Caco-2 (cell line): ENCODE measurements at regions of chr11 and their contacts with region 1.

Region 1: GRCh38 chr11:1882519-1883238 is 9.0 kb downstream of the PRR33 start:
- DNase-seq: peak; percentile 76 to 87
- H3K4me3 ChIP-seq: no peak overlapping the region
- H3K4me3 Mint-ChIP-seq: no peak overlapping the region
- H3K27ac Mint-ChIP-seq: no peak overlapping the region
- H3K4me1 ChIP-seq: peaks cover 8% of the 10 kb centered on the region
- H3K4me1 Mint-ChIP-seq: no peaks in the 10 kb centered on the region
- H3K27me3 ChIP-seq: no peaks in the 10 kb centered on the region
- H3K27me3 Mint-ChIP-seq: no peaks in the 10 kb centered on the region
- CTCF ChIP-seq: peak; percentile 89 to 95

Region 2: DNA sequence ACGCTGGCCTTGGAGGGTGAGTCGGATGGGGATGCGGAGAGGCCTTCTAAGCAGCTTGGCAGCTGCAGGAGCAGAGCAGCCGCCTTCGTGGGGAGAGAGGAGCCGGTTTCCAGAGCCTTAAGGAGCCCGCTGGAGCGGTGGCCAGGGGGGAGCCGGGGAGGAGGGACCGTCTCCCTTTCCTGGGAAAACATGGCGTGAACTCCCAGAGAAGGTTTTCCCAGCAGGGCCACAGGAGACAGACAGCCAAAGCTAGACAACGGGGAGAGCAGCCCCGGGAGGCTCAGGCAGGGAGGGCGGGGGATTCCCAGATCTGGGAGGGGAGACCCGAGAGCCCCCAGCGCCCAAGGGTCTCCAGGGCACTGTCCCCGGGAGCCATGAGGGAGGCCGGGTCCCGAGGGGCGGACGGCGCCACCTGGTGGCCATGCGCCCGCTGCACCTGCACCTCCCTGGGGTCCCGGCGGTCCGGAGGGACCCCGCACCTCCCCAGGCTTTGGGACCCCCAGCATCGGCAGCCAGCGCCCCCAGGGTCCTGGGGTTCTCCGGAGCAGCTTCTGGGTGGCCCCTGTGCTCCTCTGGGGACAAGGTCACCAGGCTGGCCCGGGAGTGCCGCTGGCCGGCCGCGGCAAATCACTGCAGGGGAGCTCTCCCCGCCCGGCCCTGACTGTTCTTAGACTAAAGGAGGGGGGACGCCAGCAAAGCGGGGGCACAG is 50.3 kb before region 1 on chr11:
- CTCF ChIA-PET with region 1: interaction called, 28 read pairs
- POLR2A ChIA-PET with region 1: no interaction called
- intact Hi-C with region 1: loop called (anchors 5 kb)
- DNase-seq: peak in 1 of 2 experiments; percentile 70
- H3K4me3 ChIP-seq: no peak overlapping the region
- H3K4me3 Mint-ChIP-seq: peak overlapping the region; percentile 33
- H3K27ac Mint-ChIP-seq: peak overlapping the region; percentile 98
- H3K4me1 ChIP-seq: peaks cover 78% of the 10 kb centered on the region
- H3K4me1 Mint-ChIP-seq: peaks cover 50% of the 10 kb centered on the region
- H3K27me3 ChIP-seq: no peaks in the 10 kb centered on the region
- H3K27me3 Mint-ChIP-seq: no peaks in the 10 kb centered on the region
- CTCF ChIP-seq: peak; percentile 80 to 95

Region 3: DNA sequence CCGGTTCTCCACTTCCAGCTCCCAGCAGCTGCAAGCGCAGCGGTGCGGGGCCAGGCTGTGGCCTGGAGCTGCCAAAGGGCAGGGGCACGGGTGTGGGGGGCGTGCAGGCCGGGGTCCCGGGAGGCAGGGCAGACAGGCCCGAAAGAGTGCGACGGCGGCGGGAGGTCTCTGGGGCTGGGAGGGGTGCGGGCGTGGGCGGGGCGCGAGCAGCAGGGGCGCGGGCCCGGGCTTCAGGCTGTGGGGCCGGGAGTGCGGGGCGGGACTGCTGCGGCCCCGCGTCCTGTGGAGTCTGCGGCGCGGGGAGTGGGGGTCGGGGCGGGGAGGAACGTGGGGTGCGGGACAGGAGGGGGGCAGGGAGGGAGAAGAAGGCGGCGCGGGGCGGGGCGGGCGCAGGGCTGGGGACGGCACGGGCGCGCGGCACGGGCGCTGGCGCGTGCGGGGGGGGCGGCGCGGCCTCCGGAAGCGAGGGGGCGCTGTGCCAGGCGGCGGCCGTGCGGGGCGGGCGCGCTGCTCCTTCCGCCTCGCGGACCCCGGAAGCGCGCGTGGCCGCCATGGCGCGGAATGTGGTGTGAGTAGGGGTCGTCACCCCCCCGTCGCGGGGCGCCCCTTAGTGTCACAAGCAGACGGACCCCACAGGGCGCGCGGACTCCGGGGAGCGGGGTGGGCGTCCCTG is 64.3 kb after region 1 on chr11 and contains the start of gene MRPL23:
- CTCF ChIA-PET with region 1: interaction called, 25 read pairs
- POLR2A ChIA-PET with region 1: no interaction called
- intact Hi-C with region 1: no loop called
- DNase-seq: no peak
- H3K4me3 ChIP-seq: no peak within 1 kb of the TSS
- H3K4me3 Mint-ChIP-seq: no peak within 1 kb of the TSS
- H3K27ac Mint-ChIP-seq: no peak within 1 kb of the TSS
- H3K4me1 ChIP-seq: no peaks in the 10 kb centered on the region
- H3K4me1 Mint-ChIP-seq: no peaks in the 10 kb centered on the region
- H3K27me3 ChIP-seq: no peaks in the 10 kb centered on the region
- H3K27me3 Mint-ChIP-seq: no peaks in the 10 kb centered on the region
- CTCF ChIP-seq: no peak
- total RNA-seq, gene MRPL23: 7.8 and 15.0 TPM in 2 replicates

Region 4: GRCh38 chr11:2574551-2575535 is 692.2 kb after region 1 on chr11:
- CTCF ChIA-PET with region 1: no interaction called
- POLR2A ChIA-PET with region 1: no interaction called
- intact Hi-C with region 1: no loop called
- DNase-seq: peak in 1 of 2 experiments; percentile 32
- H3K4me3 ChIP-seq: no peak overlapping the region
- H3K4me3 Mint-ChIP-seq: no peak overlapping the region
- H3K27ac Mint-ChIP-seq: no peak overlapping the region
- H3K4me1 ChIP-seq: peaks cover 10% of the 10 kb centered on the region; the same call in 1 of the 2 replicates
- H3K4me1 Mint-ChIP-seq: peaks cover 6% of the 10 kb centered on the region
- H3K27me3 ChIP-seq: no peaks in the 10 kb centered on the region
- H3K27me3 Mint-ChIP-seq: no peaks in the 10 kb centered on the region
- CTCF ChIP-seq: no peak